Ovary (tissue), 10 donors: ENCODE measurements at regions of chr17 and their contacts with region 1.

Region 1: DNA sequence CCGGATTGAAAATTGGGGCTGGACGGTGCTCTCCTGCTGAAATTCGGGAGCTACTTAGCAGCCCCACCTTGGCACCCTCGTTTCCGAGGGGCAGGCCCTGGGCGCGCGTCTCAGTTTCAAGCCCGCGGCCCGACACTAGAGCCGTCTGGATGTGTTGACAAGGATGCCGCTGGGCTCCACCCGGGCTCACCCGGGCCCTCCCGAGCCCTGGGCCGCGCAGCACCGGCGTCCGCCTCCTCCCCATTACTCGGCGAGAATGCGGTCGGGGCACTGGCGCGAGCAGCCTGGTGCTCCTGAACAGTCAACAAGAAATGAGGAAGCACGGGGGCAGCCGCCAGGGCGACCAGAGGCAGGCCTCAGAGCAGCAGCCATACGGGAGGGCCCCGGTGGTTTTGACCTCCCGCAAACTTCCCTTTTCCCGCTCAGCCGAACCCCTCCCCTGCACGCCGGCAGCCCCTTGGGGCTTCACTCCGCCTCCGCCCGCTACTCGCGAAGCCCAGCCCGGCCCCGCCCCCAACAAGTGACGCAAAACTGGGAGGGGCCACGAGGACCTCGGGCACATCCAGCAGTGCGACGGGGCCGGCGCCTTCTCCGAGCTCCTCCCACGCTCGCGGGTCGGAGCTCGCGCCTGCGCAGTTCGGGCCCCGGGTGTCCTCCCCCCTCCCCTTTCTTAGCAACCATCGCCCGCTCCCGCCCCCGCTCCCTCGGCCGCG is 447 bp upstream of the SEC14L1 start:
- DNase-seq: peak; percentile 98 to 100 (median 99)
- H3K4me3 ChIP-seq: peak overlapping the region; percentile 99
- H3K27ac ChIP-seq: peak overlapping the region; percentile 64 to 80
- H3K4me1 ChIP-seq: peaks cover 5% of the 10 kb centered on the region
- H3K27me3 ChIP-seq: no peaks in the 10 kb centered on the region
- CTCF ChIP-seq: peak in 2 of 3 donors; percentile 16 to 27
- EP300 ChIP-seq: peak; percentile 23
- POLR2A ChIP-seq: peak; percentile 96

Region 2: DNA sequence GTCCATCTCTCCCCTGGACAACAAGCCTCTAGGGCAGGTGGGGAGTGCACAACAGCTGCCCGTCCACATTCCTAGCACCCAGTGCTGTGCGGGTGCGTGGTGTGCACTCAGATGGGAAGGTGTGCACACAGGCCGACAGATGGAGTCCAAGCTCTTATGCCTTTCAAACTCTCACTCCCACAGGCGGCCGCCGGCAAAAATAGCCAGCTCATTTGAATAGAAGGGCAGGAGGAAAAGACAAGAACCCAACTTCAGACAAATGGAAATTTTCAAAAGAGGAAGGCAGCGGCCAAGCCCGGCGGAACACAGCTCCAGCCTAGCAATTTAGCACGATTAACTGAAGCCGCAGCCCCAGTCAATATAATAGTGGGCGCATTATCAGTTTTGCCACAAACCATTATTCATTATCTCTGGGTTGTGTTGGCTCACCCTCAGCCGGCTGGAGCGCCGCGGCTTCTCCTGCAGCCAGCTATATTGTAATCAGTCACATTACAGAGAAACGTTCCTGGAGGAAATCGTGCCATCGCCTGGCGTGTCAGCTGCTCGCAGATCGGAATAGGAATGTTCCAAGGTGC is 103.4 kb before region 1 on chr17:
- intact Hi-C with region 1: no loop called
- DNase-seq: peak in 1 of 5 donors; percentile 42
- H3K4me3 ChIP-seq: no peak overlapping the region
- H3K27ac ChIP-seq: no peak overlapping the region
- H3K4me1 ChIP-seq: no peaks in the 10 kb centered on the region
- H3K27me3 ChIP-seq: no peaks in the 10 kb centered on the region
- CTCF ChIP-seq: no peak
- EP300 ChIP-seq: no peak
- POLR2A ChIP-seq: no peak

Region 3: DNA sequence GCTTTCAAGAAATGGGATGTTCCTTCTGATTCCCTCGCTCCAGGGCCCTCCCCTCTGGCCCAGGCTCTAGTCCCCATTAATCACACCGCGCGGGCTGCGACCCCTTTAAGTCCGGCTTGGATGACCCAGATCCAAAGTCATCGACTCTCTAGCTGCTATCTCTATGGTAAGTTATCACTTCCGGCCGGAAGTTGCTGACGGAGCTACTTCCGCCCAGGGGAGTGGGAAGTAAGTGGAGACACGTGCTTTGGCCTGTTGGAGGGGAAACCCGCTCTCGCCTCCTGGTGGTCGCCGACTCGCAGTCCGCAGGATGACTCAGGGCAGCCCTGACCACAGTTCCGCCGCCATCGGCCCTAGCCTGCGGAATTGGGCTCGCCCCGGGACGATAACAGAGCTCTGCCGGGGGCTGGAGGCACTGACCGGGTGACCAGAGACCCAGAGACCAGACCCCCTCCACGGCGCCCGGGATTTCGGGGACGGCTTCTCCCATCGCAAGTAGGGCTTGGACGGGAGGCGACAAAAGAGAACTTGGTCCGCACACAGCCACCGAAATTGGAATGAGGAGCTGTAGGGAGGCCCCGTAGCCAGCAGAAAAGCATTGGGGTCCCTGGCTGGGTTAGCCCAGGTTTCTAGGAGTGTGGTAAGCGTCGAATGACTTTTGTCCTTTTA is 51.7 kb before region 1 on chr17:
- intact Hi-C with region 1: loop called in 2 of 4 experiments (anchors 5 to 10 kb)
- DNase-seq: peak; percentile 92 to 95 (median 94)
- H3K4me3 ChIP-seq: peak overlapping the region; percentile 75
- H3K27ac ChIP-seq: peak overlapping the region; percentile 66 to 75
- H3K4me1 ChIP-seq: peaks cover 3% of the 10 kb centered on the region
- H3K27me3 ChIP-seq: no peaks in the 10 kb centered on the region
- CTCF ChIP-seq: peak; percentile 87 to 95 (median 95)
- EP300 ChIP-seq: peak; percentile 7
- POLR2A ChIP-seq: peak; percentile 65

Region 4: GRCh38 chr17:77096570-77097214 is 43.6 kb before region 1 on chr17:
- intact Hi-C with region 1: loop called in 2 of 4 experiments (anchors 5 to 10 kb)
- DNase-seq: peak in 1 of 5 donors; percentile 48
- H3K4me3 ChIP-seq: no peak overlapping the region
- H3K27ac ChIP-seq: peak overlapping the region; percentile 4 to 59
- H3K4me1 ChIP-seq: peaks cover 12% of the 10 kb centered on the region
- H3K27me3 ChIP-seq: no peaks in the 10 kb centered on the region
- CTCF ChIP-seq: peak; percentile 63 to 85 (median 75)
- EP300 ChIP-seq: no peak
- POLR2A ChIP-seq: no peak

Region 5: DNA sequence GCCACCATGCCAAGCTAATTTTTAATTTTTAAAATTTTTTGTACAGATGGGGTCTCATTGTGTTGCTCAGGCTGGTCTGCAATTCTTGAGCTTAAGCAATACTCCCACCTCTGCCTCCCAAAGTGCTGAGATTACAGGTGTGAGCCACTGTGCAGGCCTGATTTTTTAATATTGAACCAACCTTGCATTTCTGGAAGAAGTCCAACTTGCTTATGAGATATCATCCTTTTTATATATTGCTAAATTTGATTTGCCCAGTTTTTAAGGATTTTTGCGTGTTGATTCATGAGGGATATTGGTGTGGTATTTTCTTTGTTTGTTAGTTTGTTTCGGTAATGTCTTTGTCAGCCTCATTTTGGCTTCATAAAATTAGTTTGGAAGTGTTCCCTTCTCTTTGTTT is 196.8 kb after region 1 on chr17:
- intact Hi-C with region 1: loop called in 1 of 4 experiments (anchors 5 kb)
- DNase-seq: no peak
- H3K4me3 ChIP-seq: no peak overlapping the region
- H3K27ac ChIP-seq: no peak overlapping the region
- H3K4me1 ChIP-seq: peaks cover 2% of the 10 kb centered on the region
- H3K27me3 ChIP-seq: no peaks in the 10 kb centered on the region
- CTCF ChIP-seq: no peak
- EP300 ChIP-seq: no peak
- POLR2A ChIP-seq: no peak

Region 6: DNA sequence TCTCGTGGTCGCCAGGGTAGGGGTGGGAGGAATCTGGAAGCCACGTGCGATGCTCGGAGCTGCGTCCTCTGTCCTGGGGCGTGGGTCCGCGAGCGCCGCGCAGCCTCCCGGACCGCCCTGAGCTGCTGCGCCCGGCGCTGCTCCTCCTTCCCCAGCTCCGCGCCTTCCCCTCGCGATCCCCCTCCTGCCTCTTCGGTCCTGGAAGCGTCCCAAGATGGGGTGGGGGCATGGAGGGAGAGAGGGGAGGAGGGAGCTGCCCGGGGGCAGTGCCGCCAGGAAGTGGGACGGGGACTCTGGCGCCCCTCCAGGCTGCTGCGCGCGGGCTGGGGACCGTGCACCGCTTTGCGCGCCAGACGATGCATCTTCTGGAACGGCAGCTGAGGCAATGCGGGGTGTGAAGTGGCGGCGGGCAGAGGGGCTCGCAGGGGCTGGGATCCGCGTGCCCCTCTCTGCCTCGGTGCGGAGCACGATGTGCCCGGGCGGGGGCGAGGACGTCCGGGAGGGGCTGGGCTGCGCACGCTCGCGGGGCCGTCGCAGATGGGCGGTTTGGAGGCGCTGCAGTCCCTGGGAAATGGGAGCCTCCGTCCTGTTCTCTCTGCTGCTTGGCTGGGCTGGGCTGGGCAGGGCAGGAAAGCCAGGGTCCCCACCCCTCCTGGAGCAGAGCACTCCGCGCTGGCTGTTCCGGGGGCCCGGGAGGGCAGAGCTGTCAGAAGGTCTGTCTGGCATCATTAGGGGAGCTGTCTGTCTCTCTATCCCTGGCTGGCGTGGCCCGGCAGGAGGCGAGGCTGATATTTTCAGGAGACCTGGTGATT is 388.4 kb after region 1 on chr17:
- intact Hi-C with region 1: no loop called
- DNase-seq: no peak
- H3K4me3 ChIP-seq: no peak overlapping the region
- H3K27ac ChIP-seq: no peak overlapping the region
- H3K4me1 ChIP-seq: no peaks in the 10 kb centered on the region
- H3K27me3 ChIP-seq: no peaks in the 10 kb centered on the region
- CTCF ChIP-seq: no peak
- EP300 ChIP-seq: no peak
- POLR2A ChIP-seq: no peak